ENCODE measurements at regions of chr10 and their contacts with region 1.

Region 1: GRCh38 chr10:71475243-71475871 is 78.6 kb downstream of the CDH23 start:
- DNase-seq: peak; percentile 50
- ATAC-seq: peak; percentile 92
- H3K4me3 Mint-ChIP-seq: no peak overlapping the region
- H3K27ac Mint-ChIP-seq: 0 out of 2 replicates have a peak overlapping the region, but pooled peaks have one; percentile 20
- H3K4me1 Mint-ChIP-seq: peaks cover 10% of the 10 kb centered on the region
- H3K27me3 Mint-ChIP-seq: no peaks in the 10 kb centered on the region
- CTCF ChIP-seq: no peak

Region 2: GRCh38 chr10:71314028-71314693 is 161.2 kb before region 1 on chr10:
- CTCF ChIA-PET with region 1: interaction called, 32 read pairs
- POLR2A ChIA-PET with region 1: no interaction called
- DNase-seq: peak; percentile 52
- ATAC-seq: peak; percentile 52
- H3K4me3 Mint-ChIP-seq: peak overlapping the region; percentile 53
- H3K27ac Mint-ChIP-seq: no peak overlapping the region
- H3K4me1 Mint-ChIP-seq: peaks cover 13% of the 10 kb centered on the region
- H3K27me3 Mint-ChIP-seq: peaks cover 13% of the 10 kb centered on the region
- CTCF ChIP-seq: peak; percentile 59

Region 3: DNA sequence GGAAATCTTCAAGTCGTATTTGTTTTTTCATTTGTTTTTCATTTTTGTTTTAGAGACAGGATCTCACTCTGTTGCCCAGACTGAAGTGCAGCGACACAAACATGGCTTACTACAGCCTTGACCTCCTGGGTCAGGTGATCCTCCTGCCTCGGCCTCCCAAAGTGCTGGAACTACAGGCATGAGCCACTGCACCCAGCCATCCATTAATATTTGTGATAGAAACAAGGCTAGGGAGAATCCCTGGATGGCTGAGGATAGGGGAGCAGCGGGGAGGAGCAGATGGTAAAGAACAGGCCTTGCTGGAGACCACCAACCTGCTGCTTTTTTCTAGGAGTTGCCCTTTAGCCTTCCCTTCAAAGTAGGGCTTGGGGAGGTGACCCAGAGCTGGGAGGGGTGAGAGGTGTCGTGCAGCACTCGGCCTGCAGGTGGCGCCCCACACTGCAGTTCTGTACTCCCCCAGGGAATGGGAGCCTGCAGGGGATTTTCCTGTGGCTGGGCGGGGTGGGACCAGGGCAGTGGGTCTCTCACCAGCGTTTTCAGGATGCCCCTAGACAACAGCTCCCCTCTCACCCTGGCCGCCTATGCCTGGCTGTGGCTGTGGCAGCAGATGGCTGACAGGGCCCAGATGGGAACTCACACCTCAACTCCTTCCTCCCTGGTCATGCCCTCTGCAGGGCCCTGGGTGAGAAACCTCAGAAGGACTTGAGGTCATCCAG is 91.2 kb before region 1 on chr10:
- CTCF ChIA-PET with region 1: interaction called, 21 read pairs
- POLR2A ChIA-PET with region 1: no interaction called
- DNase-seq: peak; percentile 93
- ATAC-seq: peak; percentile 97
- H3K4me3 Mint-ChIP-seq: no peak overlapping the region
- H3K27ac Mint-ChIP-seq: no peak overlapping the region
- H3K4me1 Mint-ChIP-seq: no peaks in the 10 kb centered on the region
- H3K27me3 Mint-ChIP-seq: no peaks in the 10 kb centered on the region
- CTCF ChIP-seq: peak; percentile 96

Region 4: DNA sequence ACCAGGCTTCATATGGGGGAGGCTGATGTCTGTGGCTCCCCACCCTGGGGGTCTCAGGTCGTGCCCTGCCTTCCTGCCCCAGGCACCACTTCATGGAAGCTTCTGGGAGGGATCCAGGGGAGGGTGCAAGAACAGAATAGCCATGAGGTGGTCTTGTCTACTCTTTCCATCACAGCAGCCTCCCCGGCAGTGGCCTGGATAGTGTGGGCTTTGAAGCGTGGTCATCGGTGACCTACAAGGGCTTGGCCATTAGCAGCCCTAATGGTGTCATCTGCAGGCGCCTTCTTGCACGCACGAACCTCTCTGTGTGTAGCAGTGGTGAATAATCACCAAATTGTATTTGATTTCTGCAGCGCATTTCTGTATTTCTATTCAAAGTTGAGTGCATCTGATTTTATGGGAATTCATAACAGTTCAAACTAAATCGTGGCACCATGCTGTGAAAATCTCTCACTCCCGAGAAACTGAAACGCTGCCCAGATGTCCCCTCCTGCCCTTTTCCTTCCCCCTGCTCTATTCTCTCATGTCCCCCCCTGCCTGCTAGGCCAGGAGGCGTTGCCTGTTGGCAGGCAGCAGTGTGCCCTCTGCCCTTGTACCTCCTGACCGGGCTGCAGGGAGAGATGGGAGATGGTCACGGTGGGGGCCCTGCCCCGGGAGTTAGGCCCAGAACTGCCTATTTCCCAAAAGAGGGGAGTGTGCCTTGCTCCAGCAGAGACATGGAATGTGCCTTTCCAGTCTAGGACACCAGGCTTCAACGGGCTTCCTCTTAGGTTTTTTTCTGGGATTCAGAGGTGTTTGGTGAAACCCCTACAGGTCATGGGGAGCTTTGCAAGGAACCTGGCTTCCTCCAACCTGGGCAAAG is 43.9 kb before region 1 on chr10:
- CTCF ChIA-PET with region 1: interaction called, 15 read pairs
- POLR2A ChIA-PET with region 1: no interaction called
- DNase-seq: peak; percentile 43
- ATAC-seq: peak; percentile 84
- H3K4me3 Mint-ChIP-seq: no peak overlapping the region
- H3K27ac Mint-ChIP-seq: no peak overlapping the region
- H3K4me1 Mint-ChIP-seq: peaks cover 9% of the 10 kb centered on the region
- H3K27me3 Mint-ChIP-seq: no peaks in the 10 kb centered on the region; the same call in 1 of the 2 replicates
- CTCF ChIP-seq: no peak

Region 5: DNA sequence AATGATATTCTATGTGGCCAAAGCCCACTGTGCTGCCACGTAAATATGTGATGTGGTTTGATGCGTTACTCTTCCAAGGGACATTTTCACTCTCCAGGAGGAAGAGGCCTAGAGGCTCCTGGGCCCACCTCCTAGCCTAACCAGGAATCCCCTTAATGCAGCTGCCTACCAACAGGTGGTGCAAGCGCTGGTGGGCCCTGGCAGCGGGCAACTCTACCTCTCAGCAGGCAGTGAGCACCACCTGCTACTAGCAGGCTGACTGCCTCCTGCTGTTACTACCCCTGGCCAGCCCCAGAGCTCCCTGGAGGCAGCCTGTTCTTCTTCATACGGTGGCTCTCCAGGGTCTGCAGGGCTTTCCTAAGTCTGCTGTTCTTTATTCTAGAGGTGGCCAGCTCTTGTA is 15.8 kb before region 1 on chr10:
- CTCF ChIA-PET with region 1: interaction called, 11 read pairs
- POLR2A ChIA-PET with region 1: no interaction called
- DNase-seq: no peak
- ATAC-seq: peak; percentile 39; the same call in 1 of the 2 replicates
- H3K4me3 Mint-ChIP-seq: no peak overlapping the region
- H3K27ac Mint-ChIP-seq: no peak overlapping the region
- H3K4me1 Mint-ChIP-seq: no peaks in the 10 kb centered on the region
- H3K27me3 Mint-ChIP-seq: no peaks in the 10 kb centered on the region
- CTCF ChIP-seq: no peak

Region 6: GRCh38 chr10:71623098-71623985 is 148.0 kb after region 1 on chr10:
- CTCF ChIA-PET with region 1: no interaction called
- POLR2A ChIA-PET with region 1: no interaction called
- DNase-seq: peak; percentile 45
- ATAC-seq: peak; percentile 40
- H3K4me3 Mint-ChIP-seq: peak overlapping the region; percentile 58
- H3K27ac Mint-ChIP-seq: peak overlapping the region; percentile 67
- H3K4me1 Mint-ChIP-seq: peaks cover 71% of the 10 kb centered on the region
- H3K27me3 Mint-ChIP-seq: peaks cover 1% of the 10 kb centered on the region
- CTCF ChIP-seq: no peak